Activated CD8-positive, alpha-beta T cell treated with anti-CD3 and anti-CD28 coated beads for 36 hours (primary cell): ENCODE measurements at regions of chr14 and their contacts with region 1.

Region 1: GRCh38 chr14:99518441-99519346 is 37.5 kb downstream of the CCNK start:
- DNase-seq: peak; percentile 90
- ATAC-seq: peak; percentile 97
- H3K4me3 Mint-ChIP-seq: no peak overlapping the region
- H3K27ac Mint-ChIP-seq: no peak overlapping the region
- H3K4me1 Mint-ChIP-seq: no peaks in the 10 kb centered on the region
- H3K27me3 Mint-ChIP-seq: no peaks in the 10 kb centered on the region
- CTCF ChIP-seq: peak; percentile 98

Region 2: DNA sequence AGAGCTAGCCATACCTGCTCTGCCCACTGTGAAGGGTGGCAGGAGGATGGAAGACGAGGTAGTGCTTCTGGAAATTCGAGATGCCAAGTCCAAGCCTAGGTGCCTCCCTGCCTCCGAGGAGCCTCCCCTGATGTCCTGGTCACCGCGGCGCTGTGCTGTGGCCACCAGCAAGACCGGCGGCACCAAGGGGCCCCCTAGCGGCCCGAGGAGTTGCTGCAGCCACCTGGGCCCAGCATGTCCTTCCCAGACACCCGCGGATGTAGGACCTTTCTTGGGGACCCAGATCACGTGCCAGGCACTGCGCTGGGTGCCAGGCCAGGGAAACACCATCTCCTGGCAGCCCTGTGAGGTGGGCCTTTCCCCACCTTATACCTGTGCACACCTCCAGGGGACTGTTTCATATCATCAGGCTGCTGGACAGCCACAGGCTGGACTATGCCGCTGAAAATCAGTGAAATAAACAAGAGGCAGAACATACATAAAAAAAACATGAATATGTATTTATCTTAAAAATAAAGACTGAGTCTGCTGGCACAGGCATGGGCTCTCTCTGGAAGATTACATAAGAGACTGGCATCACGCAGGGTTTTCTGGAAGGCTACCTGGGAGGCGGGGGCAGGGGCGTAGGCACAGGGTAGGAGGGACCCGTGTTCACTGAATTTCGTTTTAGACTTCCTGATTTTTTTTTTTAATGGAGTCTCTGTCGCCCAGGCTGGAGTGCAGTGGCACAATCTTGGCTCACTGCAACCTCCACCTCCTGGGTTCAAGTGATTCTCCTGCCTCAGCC is 110.3 kb after region 1 on chr14:
- CTCF ChIA-PET with region 1: interaction called, 8 read pairs
- POLR2A ChIA-PET with region 1: no interaction called
- intact Hi-C with region 1: loop called (anchors 2 kb)
- DNase-seq: peak; percentile 76
- ATAC-seq: peak; percentile 95
- H3K4me3 Mint-ChIP-seq: no peak overlapping the region
- H3K27ac Mint-ChIP-seq: no peak overlapping the region
- H3K4me1 Mint-ChIP-seq: peaks cover 4% of the 10 kb centered on the region
- H3K27me3 Mint-ChIP-seq: peaks cover 11% of the 10 kb centered on the region
- CTCF ChIP-seq: peak; percentile 95